Gastrocnemius medialis (tissue), 4 donors: ENCODE measurements at regions of chr3 and their contacts with region 1.

Region 1: GRCh38 chr3:119018690-119019463 is 15.8 kb downstream of the IGSF11 start:
- DNase-seq: peak; percentile 30 to 67
- ATAC-seq: peak; percentile 92 to 96
- H3K4me3 ChIP-seq: no peak overlapping the region
- H3K27ac ChIP-seq: peak overlapping the region; percentile 0 to 49 (median 14)
- H3K4me1 ChIP-seq: peaks cover 4 to 5% of the 10 kb centered on the region in 2 donors
- H3K27me3 ChIP-seq: no peaks in the 10 kb centered on the region
- CTCF ChIP-seq: no peak
- POLR2A ChIP-seq: no peak

Region 2: DNA sequence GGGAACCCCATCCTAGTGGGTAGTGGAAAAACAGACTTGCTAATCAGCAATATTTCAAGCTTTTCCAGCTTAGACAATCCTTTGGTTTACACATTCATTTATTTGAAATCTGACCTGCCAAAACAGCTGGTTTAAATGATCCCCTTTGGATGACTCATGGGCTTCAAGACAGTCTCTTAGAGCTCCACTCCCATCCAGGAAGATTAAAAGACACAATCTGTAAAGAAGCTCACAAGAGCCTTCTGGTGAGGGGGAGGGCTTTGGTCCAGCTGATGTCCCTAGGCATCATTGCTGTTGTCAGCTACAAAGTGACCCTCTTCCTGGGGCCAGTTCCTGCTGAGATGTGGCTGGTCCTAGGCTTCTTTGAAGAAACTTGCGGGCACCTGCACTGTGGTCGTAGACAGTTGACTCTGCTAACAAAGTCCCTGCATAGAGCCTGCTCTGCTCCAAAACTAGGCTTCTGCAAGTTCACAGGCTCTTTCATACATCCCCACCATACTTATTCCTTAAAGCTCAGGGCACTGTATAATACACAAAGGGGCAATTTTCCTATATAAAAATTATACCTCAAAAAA is 57.9 kb before region 1 on chr3:
- in situ Hi-C with region 1: no loop called
- intact Hi-C with region 1: loop called (anchors 10 kb)
- DNase-seq: no peak
- ATAC-seq: peak in 1 of 2 donors; percentile 45
- H3K4me3 ChIP-seq: no peak overlapping the region
- H3K27ac ChIP-seq: no peak overlapping the region
- H3K4me1 ChIP-seq: no peaks in the 10 kb centered on the region
- H3K27me3 ChIP-seq: no peaks in the 10 kb centered on the region
- CTCF ChIP-seq: no peak
- POLR2A ChIP-seq: no peak

Region 3: DNA sequence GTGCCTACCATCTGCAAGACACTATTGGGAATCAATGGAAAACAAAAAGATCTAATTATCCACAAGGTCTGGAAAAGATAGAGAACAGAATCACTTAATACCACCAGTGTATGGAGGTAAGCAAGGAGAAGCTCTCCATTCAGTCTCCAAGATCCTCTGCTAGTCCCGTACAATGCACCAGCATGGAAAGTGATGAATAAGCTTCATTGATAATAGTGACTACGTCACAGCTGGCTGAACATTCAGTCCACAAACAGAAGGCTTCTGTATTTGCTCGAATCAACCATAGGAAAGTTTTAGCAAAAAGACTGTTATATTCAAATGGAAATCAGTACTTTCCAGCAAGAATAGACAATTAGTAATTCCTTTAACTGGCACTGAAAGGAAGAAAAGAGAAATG is 27.1 kb before region 1 on chr3:
- in situ Hi-C with region 1: no loop called
- intact Hi-C with region 1: loop called (anchors 2 kb)
- DNase-seq: no peak
- ATAC-seq: no peak
- H3K4me3 ChIP-seq: no peak overlapping the region
- H3K27ac ChIP-seq: peak overlapping the region in 1 of 4 donors; percentile 8
- H3K4me1 ChIP-seq: peaks cover 13 to 18% of the 10 kb centered on the region in 2 donors
- H3K27me3 ChIP-seq: no peaks in the 10 kb centered on the region
- CTCF ChIP-seq: no peak
- POLR2A ChIP-seq: no peak

Region 4: GRCh38 chr3:119034256-119035013 is 15.6 kb after region 1 on chr3 and contains the start of gene IGSF11:
- in situ Hi-C with region 1: no loop called
- intact Hi-C with region 1: no loop called
- DNase-seq: peak; percentile 16 to 71
- ATAC-seq: peak; percentile 92 to 94
- H3K4me3 ChIP-seq: peak within 1 kb of the TSS; percentile 68 to 76 (median 72)
- H3K27ac ChIP-seq: peak within 1 kb of the TSS; percentile 63 to 77 (median 68)
- H3K4me1 ChIP-seq: peaks cover 0 to 5% of the 10 kb centered on the region in 2 donors
- H3K27me3 ChIP-seq: peaks cover 0 to 2% (median 0%) of the 10 kb centered on the region in 3 donors
- CTCF ChIP-seq: peak in 4 of 5 experiments; percentile 77 to 86 (median 82)
- POLR2A ChIP-seq: peak in 1 of 2 donors; percentile 39
- total RNA-seq, gene IGSF11: 4.7 to 11.5 (median 8.6) TPM